Left colon (tissue), 2 donors: ENCODE measurements at regions of chr16 and their contacts with region 1.

Region 1: DNA sequence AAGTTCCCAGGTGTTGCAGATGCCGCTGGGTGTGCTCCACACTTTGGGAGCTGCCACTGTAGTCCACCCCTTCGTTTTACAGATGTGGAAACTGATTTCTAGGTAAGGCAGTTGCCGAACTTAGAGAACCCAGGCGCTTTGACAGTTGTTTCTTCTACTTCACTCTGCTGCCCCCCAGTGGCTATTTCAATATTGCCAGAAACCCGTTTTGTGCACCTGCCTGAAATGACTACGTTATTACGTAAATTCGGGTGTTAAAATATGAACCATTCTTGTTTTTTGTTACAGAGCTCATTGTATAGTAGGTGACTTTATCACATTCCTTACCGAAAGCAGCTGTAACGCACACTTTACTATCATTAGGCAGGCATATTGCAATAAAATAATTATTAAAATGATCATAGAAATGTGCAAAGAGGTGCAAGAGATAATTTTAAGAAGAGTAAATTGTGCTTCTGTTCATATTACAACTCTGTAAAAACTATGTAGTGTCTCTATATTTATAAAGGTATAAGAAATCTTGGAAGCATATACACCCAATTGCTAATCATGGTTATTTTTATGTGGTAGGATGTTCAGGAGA is 44.9 kb downstream of the OTOA start:
- DNase-seq: peak; percentile 53 to 85
- ATAC-seq: peak; percentile 83

Region 2: GRCh38 chr16:21584817-21585216 is 123.8 kb before region 1 on chr16:
- intact Hi-C with region 1: loop called in 1 of 2 experiments (anchors 5 kb)
- DNase-seq: no peak
- ATAC-seq: no peak

Region 3: DNA sequence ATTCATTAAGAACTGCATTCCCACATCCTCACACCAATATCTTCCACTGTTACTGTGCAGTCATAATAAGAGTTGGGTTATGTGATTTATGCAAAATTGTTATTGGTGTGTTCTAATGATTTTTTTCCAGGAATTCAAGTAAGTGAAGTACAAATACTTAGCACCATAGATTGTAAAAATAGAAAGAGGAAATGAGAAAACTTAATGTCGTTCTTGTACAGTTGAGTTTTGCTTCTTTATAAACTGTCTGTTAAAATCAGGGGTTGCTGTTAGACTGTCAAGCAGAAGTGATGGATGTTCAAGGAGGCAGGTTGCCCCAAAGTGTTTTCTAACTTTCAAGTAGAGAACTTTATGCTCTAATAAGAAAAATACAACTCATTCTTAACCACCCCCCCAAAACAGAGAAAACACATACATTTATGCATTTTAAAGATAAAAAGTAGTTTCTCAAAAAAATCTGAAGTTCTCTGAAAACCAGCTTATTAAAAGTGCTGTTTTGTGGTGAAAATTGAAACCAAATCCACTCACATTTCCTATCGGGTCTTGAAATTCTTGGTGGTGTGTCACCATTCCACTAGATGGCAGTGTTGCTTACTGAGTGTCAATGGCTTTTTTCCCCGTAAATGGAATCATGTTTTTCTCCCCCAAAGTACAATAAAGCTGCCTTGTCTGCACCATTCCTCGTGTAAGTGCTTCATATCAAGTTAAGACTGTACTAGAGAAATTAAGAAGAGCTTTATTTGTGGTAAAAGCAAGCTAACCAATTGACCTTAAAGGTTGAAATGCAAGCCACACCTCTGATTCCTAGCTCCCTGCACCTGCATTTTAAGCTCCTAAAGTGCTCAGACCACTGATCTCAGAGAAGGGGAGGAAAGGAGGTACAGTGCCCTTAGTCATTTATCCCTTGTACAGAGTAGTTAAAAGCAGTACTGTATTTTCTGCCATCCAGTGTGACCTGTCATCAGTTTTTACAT is 51.5 kb before region 1 on chr16:
- intact Hi-C with region 1: loop called in 1 of 2 experiments (anchors 5 kb)
- DNase-seq: no peak
- ATAC-seq: peak; percentile 41